T-cell (primary cell): ENCODE measurements at regions of chr1 and their contacts with region 1.

Region 1: GRCh38 chr1:112737573-112737972 is 22.4 kb upstream of the PPM1J start:
- DNase-seq: no peak
- ATAC-seq: no peak
- H3K4me3 ChIP-seq: no peak overlapping the region
- H3K4me3 Mint-ChIP-seq: no peak overlapping the region
- H3K27ac ChIP-seq: no peak overlapping the region
- H3K27ac Mint-ChIP-seq: no peak overlapping the region
- H3K4me1 ChIP-seq: no peaks in the 10 kb centered on the region
- H3K4me1 Mint-ChIP-seq: no peaks in the 10 kb centered on the region
- H3K27me3 ChIP-seq: peaks cover 0 to 34% of the 10 kb centered on the region in 2 experiments
- H3K27me3 Mint-ChIP-seq: peaks cover 43 to 55% of the 10 kb centered on the region in 2 donors

Region 2: GRCh38 chr1:112563341-112563740 is 174.2 kb before region 1 on chr1:
- CTCF ChIA-PET with region 1: no interaction called
- POLR2A ChIA-PET with region 1: interaction called in 1 of 2 experiments, 12 read pairs
- DNase-seq: no peak
- ATAC-seq: no peak
- H3K4me3 ChIP-seq: no peak overlapping the region
- H3K4me3 Mint-ChIP-seq: no peak overlapping the region
- H3K27ac ChIP-seq: no peak overlapping the region
- H3K27ac Mint-ChIP-seq: no peak overlapping the region
- H3K4me1 ChIP-seq: no peaks in the 10 kb centered on the region
- H3K4me1 Mint-ChIP-seq: no peaks in the 10 kb centered on the region
- H3K27me3 ChIP-seq: no peaks in the 10 kb centered on the region
- H3K27me3 Mint-ChIP-seq: no peaks in the 10 kb centered on the region